ENCODE measurements at regions of chr2 and their contacts with region 1.

Region 1: DNA sequence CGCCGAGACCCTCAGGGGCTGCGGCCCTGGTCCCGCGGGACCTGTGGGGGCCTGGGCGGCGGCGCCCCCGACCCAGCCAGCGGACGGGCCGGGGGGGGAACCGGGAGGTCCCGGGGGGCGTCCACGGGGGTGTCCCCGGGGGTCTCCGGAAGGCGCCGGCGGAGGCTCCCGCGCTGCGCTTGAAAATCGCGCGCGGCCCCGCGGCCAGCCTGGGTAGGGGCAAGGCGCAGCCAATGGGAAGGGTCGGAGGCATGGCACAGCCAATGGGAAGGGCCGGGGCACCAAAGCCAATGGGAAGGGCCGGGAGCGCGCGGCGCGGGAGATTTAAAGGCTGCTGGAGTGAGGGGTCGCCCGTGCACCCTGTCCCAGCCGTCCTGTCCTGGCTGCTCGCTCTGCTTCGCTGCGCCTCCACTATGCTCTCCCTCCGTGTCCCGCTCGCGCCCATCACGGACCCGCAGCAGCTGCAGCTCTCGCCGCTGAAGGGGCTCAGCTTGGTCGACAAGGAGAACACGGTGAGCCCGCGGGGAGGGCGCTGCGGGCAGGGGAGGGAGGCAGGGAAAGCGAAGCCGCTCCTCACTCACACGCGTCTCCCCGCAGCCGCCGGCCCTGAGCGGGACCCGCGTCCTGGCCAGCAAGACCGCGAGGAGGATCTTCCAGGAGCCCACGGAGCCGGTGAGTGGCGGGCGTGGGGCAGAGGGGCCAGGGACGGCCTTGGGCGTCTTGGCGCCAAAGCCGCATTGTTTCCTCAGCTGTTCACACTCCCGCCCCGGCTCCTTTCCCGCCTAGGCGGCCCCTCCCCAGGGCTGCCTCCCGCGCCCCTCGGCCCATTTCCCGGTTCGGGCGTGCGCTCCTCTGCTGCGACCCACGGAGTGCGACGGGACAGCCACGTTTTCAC is at the start of gene RRM2:
- DNase-seq: peak; percentile 92
- H3K4me3 Mint-ChIP-seq: peak within 1 kb of the TSS; percentile 99
- H3K27ac Mint-ChIP-seq: peak within 1 kb of the TSS; percentile 100
- H3K4me1 Mint-ChIP-seq: peaks cover 64% of the 10 kb centered on the region
- H3K27me3 Mint-ChIP-seq: no peaks in the 10 kb centered on the region
- total RNA-seq, gene RRM2: 328 and 351 TPM in 2 replicates

Region 2: GRCh38 chr2:9843229-9844035 is 279.2 kb before region 1 on chr2 and contains the start of gene TAF1B:
- intact Hi-C with region 1: loop called (anchors 1 kb)
- DNase-seq: peak; percentile 87
- H3K4me3 Mint-ChIP-seq: peak within 1 kb of the TSS; percentile 91
- H3K27ac Mint-ChIP-seq: peak within 1 kb of the TSS; percentile 93
- H3K4me1 Mint-ChIP-seq: peaks cover 46% of the 10 kb centered on the region
- H3K27me3 Mint-ChIP-seq: no peaks in the 10 kb centered on the region
- total RNA-seq, gene TAF1B: 23.3 and 25.1 TPM in 2 replicates

Region 3: DNA sequence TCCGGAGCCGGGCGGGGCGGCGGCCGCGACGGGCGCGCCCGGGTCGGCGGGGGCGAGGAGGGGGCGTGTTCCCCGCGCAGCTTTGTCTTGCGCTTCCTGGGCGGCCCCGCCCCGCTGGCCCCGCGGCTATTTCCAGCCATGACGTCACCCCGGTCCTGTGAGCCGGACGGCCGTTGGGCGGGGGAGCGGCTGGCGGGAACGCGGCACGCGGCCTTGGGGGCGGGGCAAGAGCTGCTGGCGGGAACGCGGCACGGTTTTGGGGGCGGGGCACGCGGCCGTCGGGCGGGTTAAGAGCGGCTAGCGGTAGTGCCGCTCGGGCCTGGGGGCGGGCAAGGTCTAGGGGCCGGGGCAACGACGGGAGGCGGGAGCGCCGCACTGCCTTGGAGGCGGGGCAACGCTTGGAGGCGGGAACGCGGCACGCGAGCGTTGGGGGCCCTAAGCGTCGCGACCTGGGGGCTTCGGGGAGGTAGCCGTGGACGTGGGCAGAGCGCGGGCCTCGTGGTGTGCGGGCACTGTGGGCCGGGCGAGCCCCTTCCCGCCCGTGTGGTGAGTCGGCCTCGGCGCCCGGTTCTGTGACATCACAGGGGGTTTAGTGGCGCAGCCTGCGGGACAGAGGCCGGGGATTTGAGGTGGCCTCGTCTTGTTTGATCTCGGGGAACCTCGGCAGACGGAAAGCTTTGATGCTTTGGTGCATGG is 78.6 kb before region 1 on chr2:
- intact Hi-C with region 1: loop called (anchors 1 kb)
- DNase-seq: peak; percentile 86
- H3K4me3 Mint-ChIP-seq: peak overlapping the region; percentile 77
- H3K27ac Mint-ChIP-seq: peak overlapping the region; percentile 66
- H3K4me1 Mint-ChIP-seq: peaks cover 14% of the 10 kb centered on the region
- H3K27me3 Mint-ChIP-seq: peaks cover 22% of the 10 kb centered on the region

Region 4: GRCh38 chr2:10079234-10079869 is 43.3 kb before region 1 on chr2:
- intact Hi-C with region 1: loop called (anchors 1 kb)
- DNase-seq: no peak
- H3K4me3 Mint-ChIP-seq: peak overlapping the region; percentile 81
- H3K27ac Mint-ChIP-seq: peak overlapping the region; percentile 66
- H3K4me1 Mint-ChIP-seq: peaks cover 47% of the 10 kb centered on the region
- H3K27me3 Mint-ChIP-seq: peaks cover 66% of the 10 kb centered on the region

Region 5: GRCh38 chr2:10188216-10188615 is 65.6 kb after region 1 on chr2:
- intact Hi-C with region 1: no loop called
- DNase-seq: no peak
- H3K4me3 Mint-ChIP-seq: no peak overlapping the region
- H3K27ac Mint-ChIP-seq: no peak overlapping the region
- H3K4me1 Mint-ChIP-seq: no peaks in the 10 kb centered on the region
- H3K27me3 Mint-ChIP-seq: no peaks in the 10 kb centered on the region

Region 6: GRCh38 chr2:10331027-10331701 is 208.5 kb after region 1 on chr2:
- intact Hi-C with region 1: loop called (anchors 2 kb)
- DNase-seq: peak; percentile 62
- H3K4me3 Mint-ChIP-seq: peak overlapping the region; percentile 86
- H3K27ac Mint-ChIP-seq: peak overlapping the region; percentile 95
- H3K4me1 Mint-ChIP-seq: peaks cover 59% of the 10 kb centered on the region
- H3K27me3 Mint-ChIP-seq: no peaks in the 10 kb centered on the region

Region 7: GRCh38 chr2:10434886-10435819 is 312.5 kb after region 1 on chr2:
- intact Hi-C with region 1: loop called (anchors 1 kb)
- DNase-seq: peak; percentile 65
- H3K4me3 Mint-ChIP-seq: no peak overlapping the region
- H3K27ac Mint-ChIP-seq: peak overlapping the region; percentile 35
- H3K4me1 Mint-ChIP-seq: peaks cover 6% of the 10 kb centered on the region
- H3K27me3 Mint-ChIP-seq: peaks cover 2% of the 10 kb centered on the region

Region 8: DNA sequence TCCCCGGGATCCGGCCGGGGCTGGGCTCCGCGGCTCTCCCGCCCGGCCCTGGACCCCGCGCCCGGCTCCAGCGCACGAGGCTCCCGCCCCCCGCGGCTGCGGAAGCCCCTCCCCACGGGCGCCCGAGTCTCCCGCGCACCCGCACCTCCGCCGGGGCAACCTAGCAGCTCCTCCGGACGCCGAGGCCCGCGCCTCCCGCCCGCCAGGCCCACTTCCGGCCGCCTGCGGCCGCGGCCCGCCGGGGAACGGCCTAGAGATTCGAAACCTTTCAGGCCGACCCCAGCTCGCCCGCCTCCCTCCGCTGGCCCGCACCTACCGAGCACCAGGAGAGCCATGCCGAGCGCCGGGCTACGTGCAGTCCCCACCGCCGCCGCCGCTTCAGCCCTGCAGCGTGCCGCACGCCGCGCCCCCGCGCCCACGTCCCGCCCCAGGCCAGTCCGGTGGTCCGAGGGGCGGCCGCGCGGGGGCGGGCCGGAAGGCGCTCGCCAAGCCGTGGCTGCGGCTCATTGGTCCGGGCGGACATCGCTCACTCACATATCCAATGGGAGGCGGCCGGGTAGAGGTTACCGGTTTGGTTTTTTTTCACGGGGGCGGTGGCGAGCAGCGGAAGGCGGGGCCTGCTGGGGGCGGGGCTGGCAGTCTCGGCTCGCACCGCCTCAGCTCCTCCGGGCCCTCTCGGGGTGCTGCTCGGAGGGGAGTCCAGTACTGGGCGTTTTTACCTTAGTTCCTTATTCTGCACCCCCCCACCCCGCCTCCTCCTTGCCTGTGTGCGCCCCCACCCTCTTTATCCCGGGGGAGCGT is 689.9 kb after region 1 on chr2 and contains the start of gene PDIA6:
- intact Hi-C with region 1: loop called (anchors 5 kb)
- DNase-seq: peak; percentile 95
- H3K4me3 Mint-ChIP-seq: peak within 1 kb of the TSS; percentile 92
- H3K27ac Mint-ChIP-seq: peak within 1 kb of the TSS; percentile 91
- H3K4me1 Mint-ChIP-seq: peaks cover 31% of the 10 kb centered on the region
- H3K27me3 Mint-ChIP-seq: peaks cover 13% of the 10 kb centered on the region
- total RNA-seq, gene PDIA6: 171 and 173 TPM in 2 replicates

Measured in activated T-helper 1 cell treated with anti-CD3 and anti-CD28 coated beads, Interleukin-12 subunit alpha, Interleukin-12 subunit beta, Interleukin-2, Interleukin-4 antibody, amounts not matched to agents 30 ng/mL and 10 ng/mL and 1 ng/mL, durations not matched to agents 14 hours and 24 hours and 36 hours (primary cell).